Naive thymus-derived CD8-positive, alpha-beta T cell (primary cell): ENCODE measurements at regions of chr11 and their contacts with region 1.

Region 1: GRCh38 chr11:1309498-1310317 is at the start of gene TOLLIP:
- DNase-seq: peak; percentile 95 to 99 (median 99)
- ATAC-seq: peak; percentile 77 to 80
- H3K4me3 Mint-ChIP-seq: peak within 1 kb of the TSS; percentile 83 to 93 (median 88)
- H3K27ac Mint-ChIP-seq: peak within 1 kb of the TSS; percentile 87 to 98 (median 97)
- H3K4me1 Mint-ChIP-seq: peaks cover 29 to 58% (median 55%) of the 10 kb centered on the region in 4 donors
- H3K27me3 Mint-ChIP-seq: no peaks in the 10 kb centered on the region
- polyA plus RNA-seq, gene TOLLIP: 21.4 to 27.6 (median 23.4) TPM

Region 2: DNA sequence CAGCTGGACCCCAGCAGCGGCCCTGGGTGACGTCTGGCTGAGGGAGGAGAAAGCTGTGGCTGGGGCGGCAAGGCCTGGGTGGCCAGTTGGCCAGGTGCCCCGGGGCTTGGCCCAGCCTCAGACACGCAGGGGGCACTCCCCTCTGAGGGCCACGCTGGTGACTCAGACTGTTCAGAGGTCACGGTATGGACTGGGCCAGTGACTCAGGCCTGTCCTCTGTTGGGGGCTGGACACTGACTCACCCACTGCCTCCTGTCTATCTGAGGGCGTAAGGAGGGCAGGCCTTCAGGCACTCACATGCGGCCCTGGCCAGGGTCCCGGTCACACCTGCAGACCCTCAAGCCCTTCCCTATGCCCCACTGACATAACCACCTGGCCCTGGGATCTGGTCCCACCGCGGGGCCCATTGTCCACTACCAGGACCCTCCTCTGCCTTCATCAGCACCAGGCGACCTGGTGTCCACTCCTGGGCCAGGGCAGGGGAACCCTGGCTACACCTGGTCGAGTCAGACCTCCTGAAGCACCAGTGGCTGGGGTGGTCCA is 155.7 kb before region 1 on chr11:
- POLR2A ChIA-PET with region 1: no interaction called
- DNase-seq: no peak
- ATAC-seq: no peak
- H3K4me3 Mint-ChIP-seq: no peak overlapping the region
- H3K27ac Mint-ChIP-seq: no peak overlapping the region
- H3K4me1 Mint-ChIP-seq: peaks cover 0 to 6% (median 5%) of the 10 kb centered on the region in 4 donors
- H3K27me3 Mint-ChIP-seq: peaks cover 1 to 6% (median 4%) of the 10 kb centered on the region in 5 donors

Region 3: GRCh38 chr11:1262172-1263006 is 47.3 kb before region 1 on chr11:
- POLR2A ChIA-PET with region 1: interaction called, 44 read pairs
- DNase-seq: peak; percentile 75 to 92 (median 87)
- ATAC-seq: peak; percentile 90 to 92
- H3K4me3 Mint-ChIP-seq: peak overlapping the region; percentile 81 to 92 (median 88)
- H3K27ac Mint-ChIP-seq: peak overlapping the region; percentile 69 to 95 (median 92)
- H3K4me1 Mint-ChIP-seq: peaks cover 7 to 22% (median 17%) of the 10 kb centered on the region in 4 donors
- H3K27me3 Mint-ChIP-seq: no peaks in the 10 kb centered on the region

Region 4: DNA sequence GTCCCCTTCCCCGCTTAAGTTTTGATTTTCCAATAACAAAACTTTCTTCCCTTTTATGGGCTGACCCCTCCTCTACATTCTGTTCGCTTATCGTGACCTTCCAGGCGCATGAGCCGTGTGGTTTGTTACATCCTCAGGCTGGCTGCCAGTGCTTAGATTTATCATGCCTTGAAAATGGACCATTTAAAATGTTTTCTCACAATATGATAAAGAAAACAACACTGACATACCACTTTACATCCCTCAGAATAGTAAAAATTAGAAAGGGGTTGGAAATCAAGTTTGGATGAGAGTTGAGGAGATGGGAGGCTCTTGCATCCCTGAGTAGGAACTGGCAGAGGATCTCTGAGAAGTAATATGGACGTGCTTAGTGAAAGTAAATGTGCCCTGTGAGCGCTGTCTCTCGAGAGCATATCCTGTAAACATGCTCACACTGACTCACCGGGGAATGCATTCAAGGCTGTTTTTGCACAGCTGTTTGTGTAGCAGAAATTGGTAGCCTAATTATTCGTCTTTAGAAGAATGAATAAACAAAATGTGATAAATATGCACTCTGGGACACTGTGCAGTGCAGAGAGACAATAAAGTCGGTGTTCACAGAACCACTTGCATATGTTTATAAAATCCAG is 16.8 kb after region 1 on chr11:
- POLR2A ChIA-PET with region 1: interaction called, 16 read pairs
- DNase-seq: peak in 1 of 10 donors; percentile 15
- ATAC-seq: no peak
- H3K4me3 Mint-ChIP-seq: no peak overlapping the region
- H3K27ac Mint-ChIP-seq: peak overlapping the region in 2 of 10 donors; percentile 10 to 19
- H3K4me1 Mint-ChIP-seq: peaks cover 3 to 13% (median 10%) of the 10 kb centered on the region in 4 donors
- H3K27me3 Mint-ChIP-seq: peaks cover 3 to 34% (median 7%) of the 10 kb centered on the region in 5 donors

Region 5: GRCh38 chr11:1335811-1336761 is 26.4 kb after region 1 on chr11:
- POLR2A ChIA-PET with region 1: interaction called, 16 read pairs
- DNase-seq: peak; percentile 46 to 85 (median 58)
- ATAC-seq: peak; percentile 60 to 61
- H3K4me3 Mint-ChIP-seq: peak overlapping the region in 9 of 10 donors; percentile 78 to 93 (median 84)
- H3K27ac Mint-ChIP-seq: peak overlapping the region in 9 of 10 donors; percentile 66 to 94 (median 81)
- H3K4me1 Mint-ChIP-seq: peaks cover 12 to 23% (median 20%) of the 10 kb centered on the region in 4 donors
- H3K27me3 Mint-ChIP-seq: no peaks in the 10 kb centered on the region

Region 6: GRCh38 chr11:1351278-1351937 is 41.7 kb after region 1 on chr11:
- POLR2A ChIA-PET with region 1: no interaction called
- DNase-seq: peak in 1 of 10 donors; percentile 13
- ATAC-seq: no peak
- H3K4me3 Mint-ChIP-seq: no peak overlapping the region
- H3K27ac Mint-ChIP-seq: peak overlapping the region in 1 of 10 donors; percentile 53
- H3K4me1 Mint-ChIP-seq: no peaks in the 10 kb centered on the region
- H3K27me3 Mint-ChIP-seq: peaks cover 3 to 8% (median 5%) of the 10 kb centered on the region in 5 donors

Region 7: DNA sequence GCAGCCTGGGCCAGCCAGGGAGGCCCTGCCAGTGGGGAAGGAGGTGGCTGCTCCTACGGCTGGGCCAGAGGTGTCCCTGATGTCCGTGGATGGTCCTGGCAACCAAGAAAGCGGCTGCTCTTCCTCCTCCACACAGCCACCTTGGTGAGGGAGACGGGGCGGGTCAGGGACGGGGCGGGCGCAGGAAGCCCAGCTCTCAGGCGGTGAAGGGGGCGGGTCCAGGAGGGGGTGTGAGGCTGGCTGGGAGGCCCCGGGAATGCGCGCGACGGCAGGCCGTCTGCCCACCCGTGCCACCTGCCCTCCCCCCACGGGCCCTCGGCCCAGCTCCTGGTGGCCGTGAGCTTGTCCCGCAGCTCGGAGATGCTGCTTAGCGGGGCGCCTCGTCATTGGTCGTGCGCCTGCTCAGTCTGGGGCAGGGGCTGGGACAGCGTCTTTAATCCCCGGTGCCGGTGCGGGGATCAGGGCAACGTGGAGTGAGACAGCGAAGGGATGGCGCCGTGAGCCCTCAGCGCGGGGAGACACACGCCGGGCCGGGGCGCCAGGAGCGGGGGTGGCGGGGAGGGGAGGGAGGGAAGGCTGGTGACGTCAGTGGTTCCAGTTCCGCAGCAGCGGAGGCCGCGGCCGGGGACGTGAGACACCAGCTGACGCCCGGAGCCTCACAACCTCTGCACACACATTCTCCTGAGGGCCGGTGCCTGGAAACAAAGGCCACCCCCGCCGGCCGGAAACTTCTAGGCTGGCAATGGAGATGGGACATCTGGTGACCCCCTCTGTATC is 73.3 kb after region 1 on chr11:
- POLR2A ChIA-PET with region 1: interaction called, 20 read pairs
- DNase-seq: peak; percentile 60 to 87 (median 68)
- ATAC-seq: peak; percentile 80 to 83
- H3K4me3 Mint-ChIP-seq: peak overlapping the region; percentile 69 to 88 (median 80)
- H3K27ac Mint-ChIP-seq: peak overlapping the region in 9 of 10 donors; percentile 35 to 96 (median 89)
- H3K4me1 Mint-ChIP-seq: peaks cover 7 to 17% (median 11%) of the 10 kb centered on the region in 4 donors
- H3K27me3 Mint-ChIP-seq: peaks cover 0 to 3% (median 0%) of the 10 kb centered on the region in 5 donors

Region 8: GRCh38 chr11:1395771-1396374 is 86.2 kb after region 1 on chr11:
- POLR2A ChIA-PET with region 1: no interaction called
- DNase-seq: no peak
- ATAC-seq: no peak
- H3K4me3 Mint-ChIP-seq: no peak overlapping the region
- H3K27ac Mint-ChIP-seq: no peak overlapping the region
- H3K4me1 Mint-ChIP-seq: peaks cover 0 to 11% (median 5%) of the 10 kb centered on the region in 4 donors
- H3K27me3 Mint-ChIP-seq: peaks cover 7 to 38% (median 17%) of the 10 kb centered on the region in 5 donors